Mammary epithelial cell (primary cell): ENCODE measurements at regions of chr15 and their contacts with region 1.

Region 1: DNA sequence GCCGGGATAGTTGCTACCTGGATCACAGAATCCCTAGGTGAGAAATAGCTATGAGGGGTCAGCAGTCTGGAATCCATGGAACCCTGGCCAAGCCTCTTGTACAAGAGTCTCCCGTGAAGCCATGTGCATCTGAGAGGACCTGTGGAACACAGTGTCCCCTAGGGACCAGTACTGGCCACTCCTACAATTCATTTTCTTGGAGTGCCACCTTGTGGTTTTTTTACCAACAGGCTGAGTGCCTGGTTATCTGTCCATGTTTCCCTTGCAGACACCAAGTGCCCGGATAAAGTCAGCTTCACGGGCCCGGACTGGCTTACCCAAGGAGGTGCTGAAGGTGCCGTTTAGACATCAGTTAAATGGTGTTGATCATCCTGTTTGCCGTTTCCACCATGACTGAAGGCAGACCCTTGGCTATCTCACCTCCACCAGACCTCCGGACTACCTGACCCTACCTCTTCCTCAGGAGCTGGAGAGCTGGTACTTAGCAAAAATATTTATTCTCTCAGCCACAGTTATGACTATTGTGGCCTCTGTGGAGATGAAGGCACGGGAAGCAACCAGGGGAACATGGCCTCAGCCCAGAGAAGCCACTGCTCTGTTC is 93.9 kb downstream of the RBPMS2 start:
- DNase-seq: peak; percentile 53
- H3K4me3 ChIP-seq: no peak overlapping the region
- H3K27ac ChIP-seq: no peak overlapping the region
- H3K4me1 ChIP-seq: no peaks in the 10 kb centered on the region
- H3K27me3 ChIP-seq: no peaks in the 10 kb centered on the region
- CTCF ChIP-seq: peak; percentile 58 to 86

Region 2: GRCh38 chr15:64162870-64163658 is 518.5 kb before region 1 on chr15 and contains the start of gene PPIB:
- CTCF ChIA-PET with region 1: no interaction called
- dilution Hi-C with region 1: no loop called
- in situ Hi-C with region 1: no loop called
- intact Hi-C with region 1: loop called (anchors 5 kb)
- DNase-seq: peak; percentile 98
- H3K4me3 ChIP-seq: peak within 1 kb of the TSS; percentile 95 to 99 (median 97)
- H3K27ac ChIP-seq: peak within 1 kb of the TSS; percentile 75
- H3K4me1 ChIP-seq: peaks cover 21% of the 10 kb centered on the region
- H3K27me3 ChIP-seq: no peaks in the 10 kb centered on the region
- CTCF ChIP-seq: peak; percentile 24 to 59
- total RNA-seq, gene PPIB: 360 to 523 TPM

Region 3: GRCh38 chr15:64430000-64430735 is 251.4 kb before region 1 on chr15:
- CTCF ChIA-PET with region 1: no interaction called
- dilution Hi-C with region 1: loop called (anchors 5 kb)
- in situ Hi-C with region 1: no loop called
- intact Hi-C with region 1: loop called (anchors 1 kb)
- DNase-seq: peak; percentile 80
- H3K4me3 ChIP-seq: no peak overlapping the region
- H3K27ac ChIP-seq: no peak overlapping the region
- H3K4me1 ChIP-seq: peaks cover 13% of the 10 kb centered on the region
- H3K27me3 ChIP-seq: no peaks in the 10 kb centered on the region
- CTCF ChIP-seq: no peak

Region 4: GRCh38 chr15:64460206-64460734 is 221.3 kb before region 1 on chr15 and contains the start of gene ZNF609:
- CTCF ChIA-PET with region 1: no interaction called
- dilution Hi-C with region 1: no loop called
- in situ Hi-C with region 1: no loop called
- intact Hi-C with region 1: loop called (anchors 1 kb)
- DNase-seq: peak; percentile 94
- H3K4me3 ChIP-seq: peak within 1 kb of the TSS; percentile 51 to 67 (median 63)
- H3K27ac ChIP-seq: peak within 1 kb of the TSS; percentile 39
- H3K4me1 ChIP-seq: peaks cover 8% of the 10 kb centered on the region
- H3K27me3 ChIP-seq: no peaks in the 10 kb centered on the region
- CTCF ChIP-seq: no peak
- total RNA-seq, gene ZNF609: 24.3 to 38.1 TPM

Region 5: GRCh38 chr15:64582202-64582601 is 99.3 kb before region 1 on chr15:
- CTCF ChIA-PET with region 1: no interaction called
- dilution Hi-C with region 1: loop called (anchors 5 kb)
- in situ Hi-C with region 1: no loop called
- intact Hi-C with region 1: no loop called
- DNase-seq: no peak
- H3K4me3 ChIP-seq: no peak overlapping the region
- H3K27ac ChIP-seq: no peak overlapping the region
- H3K4me1 ChIP-seq: peaks cover 4% of the 10 kb centered on the region
- H3K27me3 ChIP-seq: no peaks in the 10 kb centered on the region
- CTCF ChIP-seq: no peak

Region 6: GRCh38 chr15:64634576-64635498 is 46.7 kb before region 1 on chr15:
- CTCF ChIA-PET with region 1: no interaction called
- dilution Hi-C with region 1: no loop called
- in situ Hi-C with region 1: no loop called
- intact Hi-C with region 1: no loop called
- DNase-seq: no peak
- H3K4me3 ChIP-seq: no peak overlapping the region
- H3K27ac ChIP-seq: peak overlapping the region; percentile 38
- H3K4me1 ChIP-seq: peaks cover 16% of the 10 kb centered on the region
- H3K27me3 ChIP-seq: no peaks in the 10 kb centered on the region
- CTCF ChIP-seq: no peak

Region 7: GRCh38 chr15:64667736-64668161 is 13.8 kb before region 1 on chr15:
- CTCF ChIA-PET with region 1: no interaction called
- dilution Hi-C with region 1: no loop called
- in situ Hi-C with region 1: no loop called
- intact Hi-C with region 1: no loop called
- DNase-seq: no peak
- H3K4me3 ChIP-seq: no peak overlapping the region
- H3K27ac ChIP-seq: no peak overlapping the region
- H3K4me1 ChIP-seq: no peaks in the 10 kb centered on the region
- H3K27me3 ChIP-seq: no peaks in the 10 kb centered on the region
- CTCF ChIP-seq: no peak

Region 8: GRCh38 chr15:64717735-64718495 is 36.4 kb after region 1 on chr15:
- CTCF ChIA-PET with region 1: no interaction called
- dilution Hi-C with region 1: loop called (anchors 5 kb)
- in situ Hi-C with region 1: no loop called
- intact Hi-C with region 1: no loop called
- DNase-seq: no peak
- H3K4me3 ChIP-seq: no peak overlapping the region
- H3K27ac ChIP-seq: no peak overlapping the region
- H3K4me1 ChIP-seq: no peaks in the 10 kb centered on the region
- H3K27me3 ChIP-seq: no peaks in the 10 kb centered on the region
- CTCF ChIP-seq: no peak

Region 9: GRCh38 chr15:64809649-64810496 is 128.3 kb after region 1 on chr15:
- CTCF ChIA-PET with region 1: interaction called, 3 read pairs
- dilution Hi-C with region 1: no loop called
- in situ Hi-C with region 1: no loop called
- intact Hi-C with region 1: loop called (anchors 5 kb)
- DNase-seq: peak; percentile 41
- H3K4me3 ChIP-seq: no peak overlapping the region
- H3K27ac ChIP-seq: no peak overlapping the region
- H3K4me1 ChIP-seq: no peaks in the 10 kb centered on the region
- H3K27me3 ChIP-seq: no peaks in the 10 kb centered on the region
- CTCF ChIP-seq: peak; percentile 86 to 97